Uterus (tissue), 4 donors: ENCODE measurements at regions of chr3 and their contacts with region 1.

Region 1: DNA sequence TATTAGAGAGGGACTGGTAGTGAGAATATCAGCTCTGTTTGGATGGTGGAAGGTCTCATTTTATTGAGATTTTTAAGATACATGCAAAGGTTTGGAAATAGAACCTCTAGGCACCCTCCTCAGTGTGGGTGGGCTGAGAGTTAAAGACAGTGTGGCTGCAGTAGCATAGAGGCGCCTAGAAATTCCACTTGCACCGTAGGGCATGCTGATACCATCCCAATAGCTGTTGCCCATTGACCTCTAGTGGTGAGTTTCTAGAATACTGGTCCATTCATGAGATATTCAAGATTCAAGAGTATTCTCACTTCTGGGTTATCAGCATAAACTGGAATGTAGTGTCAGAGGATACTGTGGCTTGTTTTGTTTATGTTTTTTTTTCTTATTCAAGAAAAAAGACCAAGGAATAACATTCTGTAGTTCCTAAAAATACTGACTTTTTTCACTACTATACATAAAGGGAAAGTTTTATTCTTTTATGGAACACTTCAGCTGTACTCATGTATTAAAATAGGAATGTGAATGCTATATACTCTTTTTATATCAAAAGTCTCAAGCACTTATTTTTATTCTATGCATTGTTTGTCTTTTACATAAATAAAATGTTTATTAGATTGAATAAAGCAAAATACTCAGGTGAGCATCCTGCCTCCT is 87.2 kb downstream of the TGFBR2 start:
- DNase-seq: peak in 1 of 2 donors; percentile 54
- H3K4me3 ChIP-seq: no peak overlapping the region
- H3K27ac ChIP-seq: peak overlapping the region; percentile 25 to 49
- H3K4me1 ChIP-seq: peaks cover 6 to 7% of the 10 kb centered on the region in 2 donors
- H3K27me3 ChIP-seq: no peaks in the 10 kb centered on the region
- CTCF ChIP-seq: peak; percentile 77 to 87 (median 82)
- POLR2A ChIP-seq: no peak

Region 2: DNA sequence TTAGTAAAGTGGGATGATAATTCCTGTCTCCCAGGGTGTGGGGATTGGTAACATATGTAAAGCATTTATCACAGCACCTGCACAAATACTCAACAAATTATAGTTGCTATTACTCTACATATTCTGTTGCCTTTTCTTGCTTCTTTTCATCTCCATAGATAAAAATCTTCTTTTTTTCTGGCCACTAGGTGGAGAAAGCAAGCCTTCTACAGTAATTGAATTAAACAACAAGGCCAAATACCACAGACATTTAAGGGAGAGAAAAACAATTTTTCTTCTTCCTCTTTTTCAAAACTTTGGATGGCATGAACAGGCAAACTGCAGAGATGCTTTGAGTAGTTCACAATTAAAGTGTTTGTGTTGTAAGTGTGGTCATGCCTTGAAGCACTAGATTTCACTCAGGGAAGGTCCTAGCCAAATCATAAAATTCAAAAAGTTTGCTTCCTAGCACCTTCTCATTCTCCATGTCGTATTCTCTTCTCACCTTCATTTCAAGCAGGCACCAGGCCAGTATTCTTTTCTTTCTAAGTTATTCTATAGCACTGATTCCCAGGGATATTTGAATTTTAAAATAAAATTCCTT is 580.6 kb before region 1 on chr3:
- intact Hi-C with region 1: loop called (anchors 10 kb)
- DNase-seq: no peak
- H3K4me3 ChIP-seq: no peak overlapping the region
- H3K27ac ChIP-seq: no peak overlapping the region
- H3K4me1 ChIP-seq: peaks cover 0 to 5% of the 10 kb centered on the region in 2 donors
- H3K27me3 ChIP-seq: no peaks in the 10 kb centered on the region
- CTCF ChIP-seq: peak; percentile 71 to 73 (median 72)
- POLR2A ChIP-seq: no peak

Region 3: GRCh38 chr3:30996467-30997052 is 303.0 kb after region 1 on chr3:
- intact Hi-C with region 1: no loop called
- DNase-seq: no peak
- H3K4me3 ChIP-seq: no peak overlapping the region
- H3K27ac ChIP-seq: no peak overlapping the region
- H3K4me1 ChIP-seq: no peaks in the 10 kb centered on the region
- H3K27me3 ChIP-seq: no peaks in the 10 kb centered on the region
- CTCF ChIP-seq: no peak
- POLR2A ChIP-seq: no peak